Breast epithelium (tissue), 4 donors: ENCODE measurements at regions of chr18 and their contacts with region 1.

Region 1: GRCh38 chr18:32552421-32553030 is 81.8 kb upstream of the GAREM1 start:
- DNase-seq: peak in 1 of 2 donors; percentile 56
- H3K4me3 ChIP-seq: no peak overlapping the region
- H3K27ac ChIP-seq: no peak overlapping the region
- H3K4me1 ChIP-seq: no peaks in the 10 kb centered on the region
- H3K27me3 ChIP-seq: no peaks in the 10 kb centered on the region
- CTCF ChIP-seq: peak; percentile 68 to 81 (median 79)
- POLR2A ChIP-seq: no peak

Region 2: GRCh38 chr18:32158108-32158624 is 394.4 kb before region 1 on chr18:
- intact Hi-C with region 1: loop called (anchors 10 kb)
- DNase-seq: peak; percentile 67 to 76
- H3K4me3 ChIP-seq: peak overlapping the region; percentile 15 to 46 (median 33)
- H3K27ac ChIP-seq: no peak overlapping the region
- H3K4me1 ChIP-seq: no peaks in the 10 kb centered on the region
- H3K27me3 ChIP-seq: no peaks in the 10 kb centered on the region
- CTCF ChIP-seq: peak; percentile 58 to 91 (median 82)
- POLR2A ChIP-seq: no peak

Region 3: GRCh38 chr18:32271672-32272208 is 280.8 kb before region 1 on chr18:
- intact Hi-C with region 1: loop called (anchors 10 kb)
- DNase-seq: no peak
- H3K4me3 ChIP-seq: no peak overlapping the region
- H3K27ac ChIP-seq: no peak overlapping the region
- H3K4me1 ChIP-seq: no peaks in the 10 kb centered on the region
- H3K27me3 ChIP-seq: no peaks in the 10 kb centered on the region
- CTCF ChIP-seq: peak in 2 of 3 donors; percentile 66 to 78
- POLR2A ChIP-seq: no peak

Region 4: GRCh38 chr18:32742579-32742978 is 190.1 kb after region 1 on chr18:
- intact Hi-C with region 1: no loop called
- DNase-seq: no peak
- H3K4me3 ChIP-seq: no peak overlapping the region
- H3K27ac ChIP-seq: no peak overlapping the region
- H3K4me1 ChIP-seq: no peaks in the 10 kb centered on the region
- H3K27me3 ChIP-seq: no peaks in the 10 kb centered on the region
- CTCF ChIP-seq: no peak
- POLR2A ChIP-seq: no peak

Region 5: GRCh38 chr18:33611525-33612135 is 1059.1 kb after region 1 on chr18:
- intact Hi-C with region 1: no loop called
- DNase-seq: no peak
- H3K4me3 ChIP-seq: no peak overlapping the region
- H3K27ac ChIP-seq: no peak overlapping the region
- H3K4me1 ChIP-seq: no peaks in the 10 kb centered on the region
- H3K27me3 ChIP-seq: no peaks in the 10 kb centered on the region
- CTCF ChIP-seq: no peak
- POLR2A ChIP-seq: no peak